Panc1 (cell line): ENCODE measurements at regions of chr18 and their contacts with region 1.

Region 1: DNA sequence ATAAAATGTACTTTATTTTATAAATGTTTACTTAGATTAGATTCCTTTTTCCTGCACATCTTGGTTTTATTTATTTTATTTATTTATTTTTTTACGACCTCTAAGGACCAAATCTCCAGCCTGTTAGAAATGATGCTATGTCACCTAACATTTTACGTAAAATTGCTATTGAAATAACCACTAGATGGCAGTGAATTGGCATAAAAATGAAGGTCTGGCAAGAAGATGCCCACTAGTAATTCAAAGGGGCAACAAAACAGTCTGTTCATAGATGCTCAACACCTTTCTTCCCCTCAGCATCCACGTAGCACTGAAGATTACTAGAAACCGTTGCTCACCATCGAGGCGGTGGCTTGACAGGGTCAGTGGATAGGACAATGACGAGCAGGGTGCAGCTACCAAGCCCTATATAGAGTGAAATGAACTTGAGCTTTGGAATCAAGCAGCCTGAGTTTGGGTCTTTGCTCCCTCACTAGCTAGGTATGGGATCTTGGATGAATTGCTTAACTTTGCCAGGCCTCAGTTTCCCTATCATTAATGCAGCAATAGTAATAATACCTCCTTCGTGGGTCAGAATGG is 128.7 kb upstream of the L3MBTL4 start:
- DNase-seq: no peak
- ATAC-seq: no peak
- H3K4me3 ChIP-seq: no peak overlapping the region
- H3K27ac ChIP-seq: no peak overlapping the region
- H3K4me1 ChIP-seq: no peaks in the 10 kb centered on the region
- H3K27me3 ChIP-seq: no peaks in the 10 kb centered on the region
- CTCF ChIP-seq: peak; percentile 68

Region 2: GRCh38 chr18:6795307-6795706 is 251.9 kb after region 1 on chr18:
- CTCF ChIA-PET with region 1: no interaction called
- POLR2A ChIA-PET with region 1: no interaction called
- in situ Hi-C with region 1: no loop called
- intact Hi-C with region 1: no loop called
- DNase-seq: no peak
- ATAC-seq: no peak
- H3K4me3 ChIP-seq: no peak overlapping the region
- H3K27ac ChIP-seq: no peak overlapping the region
- H3K4me1 ChIP-seq: no peaks in the 10 kb centered on the region
- H3K27me3 ChIP-seq: no peaks in the 10 kb centered on the region
- CTCF ChIP-seq: no peak

Region 3: DNA sequence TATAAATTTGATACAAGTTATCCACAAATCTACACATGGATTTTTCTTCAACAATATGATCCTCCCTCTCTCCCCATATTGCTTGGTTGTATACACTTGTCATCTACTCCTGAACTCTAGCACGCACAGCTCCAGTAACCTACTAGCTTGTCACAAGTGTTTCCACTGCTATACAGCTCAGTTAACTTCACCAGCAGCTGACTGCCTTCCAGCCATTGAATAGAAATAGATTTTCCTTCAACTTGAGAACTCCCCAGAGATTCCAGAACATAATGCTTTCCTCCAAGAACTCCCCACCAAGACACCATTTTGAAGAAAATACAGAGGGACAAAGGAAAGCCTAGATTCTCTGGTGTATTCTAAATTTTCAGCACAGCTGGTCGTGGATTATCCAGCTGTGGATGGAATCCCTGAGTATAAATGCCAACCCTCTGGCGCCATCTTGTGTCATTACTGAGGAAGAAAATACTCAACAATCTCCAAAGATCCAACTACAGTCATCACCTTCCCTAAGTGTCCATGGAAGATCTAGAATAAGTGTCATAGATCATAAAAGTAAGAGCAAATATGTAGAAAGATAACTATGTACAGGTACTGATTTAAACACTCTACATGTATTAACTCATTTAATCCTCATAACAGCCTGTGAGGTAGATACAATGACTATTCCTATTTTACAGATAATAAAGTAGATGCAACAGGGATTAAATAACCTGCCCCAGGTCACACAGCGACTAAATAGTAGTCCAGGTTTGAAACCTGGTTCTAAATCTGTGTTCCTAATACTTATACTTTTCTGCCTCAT is 342.8 kb after region 1 on chr18:
- CTCF ChIA-PET with region 1: interaction called, 4 read pairs
- POLR2A ChIA-PET with region 1: no interaction called
- in situ Hi-C with region 1: no loop called
- intact Hi-C with region 1: loop called (anchors 1 kb)
- DNase-seq: peak; percentile 10
- ATAC-seq: 0 out of 2 replicates have a peak, but pooled peaks have one; percentile 81
- H3K4me3 ChIP-seq: no peak overlapping the region
- H3K27ac ChIP-seq: no peak overlapping the region
- H3K4me1 ChIP-seq: no peaks in the 10 kb centered on the region
- H3K27me3 ChIP-seq: no peaks in the 10 kb centered on the region
- CTCF ChIP-seq: peak; percentile 72

Region 4: DNA sequence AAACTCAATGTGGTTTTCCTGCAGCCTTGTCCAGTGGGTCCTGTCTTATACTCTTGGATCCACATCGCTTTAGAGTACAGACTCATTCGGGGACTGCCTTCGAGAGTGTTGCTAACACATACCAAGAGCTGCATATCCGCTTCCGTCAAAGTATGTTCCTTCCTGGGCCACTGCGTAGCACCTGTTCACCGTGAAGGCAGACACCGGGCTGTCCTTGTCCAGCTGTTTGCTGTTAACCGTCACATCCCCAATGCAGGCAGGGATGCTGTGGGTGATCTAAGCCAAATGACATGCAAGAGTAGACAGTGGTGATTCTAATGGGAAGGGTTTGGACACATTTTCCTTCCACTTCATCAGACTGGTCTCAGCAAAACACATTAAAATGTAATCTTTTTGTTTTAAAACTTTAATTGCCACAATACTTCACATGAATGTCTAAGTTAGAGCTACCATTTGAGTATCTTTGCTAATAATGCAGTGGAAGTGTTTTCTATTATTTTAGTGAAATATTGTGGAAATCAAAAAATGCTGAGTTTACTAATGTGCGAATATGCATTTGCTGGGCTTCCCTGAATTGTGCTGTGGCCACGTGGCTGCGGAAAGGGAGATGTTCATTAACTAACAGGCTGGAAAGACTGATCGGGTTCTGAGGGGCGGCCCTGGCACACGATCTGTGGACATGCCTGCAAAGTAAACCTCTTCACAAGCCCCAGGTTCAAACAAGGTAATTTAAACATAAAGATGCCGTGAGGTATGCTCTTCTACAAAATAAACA is 405.0 kb after region 1 on chr18:
- CTCF ChIA-PET with region 1: no interaction called
- POLR2A ChIA-PET with region 1: no interaction called
- in situ Hi-C with region 1: no loop called
- intact Hi-C with region 1: no loop called
- DNase-seq: no peak
- ATAC-seq: no peak
- H3K4me3 ChIP-seq: no peak overlapping the region
- H3K27ac ChIP-seq: no peak overlapping the region
- H3K4me1 ChIP-seq: no peaks in the 10 kb centered on the region
- H3K27me3 ChIP-seq: no peaks in the 10 kb centered on the region
- CTCF ChIP-seq: no peak